Heart right ventricle (tissue), 16 donors: ENCODE measurements at regions of chrX and their contacts with region 1.

Region 1: GRCh38 chrX:88170528-88170927 is 576.5 kb upstream of the CPXCR1 start:
- DNase-seq: no peak
- ATAC-seq: no peak
- H3K4me3 ChIP-seq: no peak overlapping the region
- H3K27ac ChIP-seq: no peak overlapping the region
- H3K4me1 ChIP-seq: no peaks in the 10 kb centered on the region
- H3K27me3 ChIP-seq: no peaks in the 10 kb centered on the region
- CTCF ChIP-seq: no peak

Region 2: GRCh38 chrX:87846956-87847355 is 323.6 kb before region 1 on chrX:
- intact Hi-C with region 1: no loop called
- DNase-seq: no peak
- ATAC-seq: no peak
- H3K4me3 ChIP-seq: no peak overlapping the region
- H3K27ac ChIP-seq: no peak overlapping the region
- H3K4me1 ChIP-seq: no peaks in the 10 kb centered on the region
- H3K27me3 ChIP-seq: no peaks in the 10 kb centered on the region
- CTCF ChIP-seq: no peak

Region 3: GRCh38 chrX:88146577-88146976 is 24.0 kb before region 1 on chrX:
- intact Hi-C with region 1: no loop called
- DNase-seq: no peak
- ATAC-seq: no peak
- H3K4me3 ChIP-seq: no peak overlapping the region
- H3K27ac ChIP-seq: no peak overlapping the region
- H3K4me1 ChIP-seq: no peaks in the 10 kb centered on the region
- H3K27me3 ChIP-seq: no peaks in the 10 kb centered on the region
- CTCF ChIP-seq: no peak

Region 4: GRCh38 chrX:88558421-88558820 is 387.9 kb after region 1 on chrX:
- intact Hi-C with region 1: loop called in 1 of 10 experiments (anchors 10 kb)
- DNase-seq: no peak
- ATAC-seq: no peak
- H3K4me3 ChIP-seq: no peak overlapping the region
- H3K27ac ChIP-seq: no peak overlapping the region
- H3K4me1 ChIP-seq: no peaks in the 10 kb centered on the region
- H3K27me3 ChIP-seq: no peaks in the 10 kb centered on the region
- CTCF ChIP-seq: no peak